ENCODE measurements at regions of chr4 and their contacts with region 1.

Region 1: GRCh38 chr4:53015681-53016080 is 153.6 kb downstream of the RASL11B start:
- DNase-seq: no peak
- ATAC-seq: no peak
- H3K4me3 ChIP-seq: no peak overlapping the region
- H3K27ac ChIP-seq: no peak overlapping the region
- H3K4me1 ChIP-seq: 0 out of 2 replicates have a peak, but pooled peaks cover 4% of the 10 kb centered on the region
- H3K27me3 ChIP-seq: no peaks in the 10 kb centered on the region
- CTCF ChIP-seq: peak; percentile 61; the same call in 1 of the 2 replicates

Region 2: GRCh38 chr4:53075162-53075785 is 59.6 kb after region 1 on chr4:
- CTCF ChIA-PET with region 1: no interaction called
- POLR2A ChIA-PET with region 1: no interaction called
- in situ Hi-C with region 1: no loop called
- intact Hi-C with region 1: loop called (anchors 10 kb)
- DNase-seq: no peak
- ATAC-seq: no peak
- H3K4me3 ChIP-seq: no peak overlapping the region
- H3K27ac ChIP-seq: no peak overlapping the region
- H3K4me1 ChIP-seq: no peaks in the 10 kb centered on the region
- H3K27me3 ChIP-seq: no peaks in the 10 kb centered on the region
- CTCF ChIP-seq: no peak

Region 3: GRCh38 chr4:53196882-53197771 is 181.4 kb after region 1 on chr4:
- CTCF ChIA-PET with region 1: no interaction called
- POLR2A ChIA-PET with region 1: no interaction called
- in situ Hi-C with region 1: no loop called
- intact Hi-C with region 1: loop called (anchors 10 kb)
- DNase-seq: peak; percentile 36
- ATAC-seq: peak; percentile 62; the same call in 1 of the 2 replicates
- H3K4me3 ChIP-seq: no peak overlapping the region
- H3K27ac ChIP-seq: no peak overlapping the region
- H3K4me1 ChIP-seq: no peaks in the 10 kb centered on the region
- H3K27me3 ChIP-seq: no peaks in the 10 kb centered on the region
- CTCF ChIP-seq: peak; percentile 61; the same call in 1 of the 2 replicates

Region 4: GRCh38 chr4:53365486-53366300 is 350.0 kb after region 1 on chr4 and contains the start of gene SCFD2:
- CTCF ChIA-PET with region 1: no interaction called
- POLR2A ChIA-PET with region 1: no interaction called
- in situ Hi-C with region 1: no loop called
- intact Hi-C with region 1: loop called (anchors 10 kb)
- DNase-seq: peak; percentile 80
- ATAC-seq: peak; percentile 100
- H3K4me3 ChIP-seq: peak within 1 kb of the TSS; percentile 89 to 95
- H3K27ac ChIP-seq: peak within 1 kb of the TSS; percentile 90
- H3K4me1 ChIP-seq: no peaks in the 10 kb centered on the region; the same call in 1 of the 2 replicates
- H3K27me3 ChIP-seq: no peaks in the 10 kb centered on the region; the same call in 1 of the 2 replicates
- CTCF ChIP-seq: no peak
- total RNA-seq, gene SCFD2: 7.4 TPM

Region 5: GRCh38 chr4:53489279-53489889 is 473.7 kb after region 1 on chr4:
- CTCF ChIA-PET with region 1: no interaction called
- POLR2A ChIA-PET with region 1: no interaction called
- in situ Hi-C with region 1: no loop called
- intact Hi-C with region 1: loop called (anchors 10 kb)
- DNase-seq: no peak
- ATAC-seq: no peak
- H3K4me3 ChIP-seq: no peak overlapping the region
- H3K27ac ChIP-seq: no peak overlapping the region
- H3K4me1 ChIP-seq: no peaks in the 10 kb centered on the region
- H3K27me3 ChIP-seq: no peaks in the 10 kb centered on the region
- CTCF ChIP-seq: no peak

Region 6: GRCh38 chr4:53520116-53520515 is 504.4 kb after region 1 on chr4:
- CTCF ChIA-PET with region 1: no interaction called
- POLR2A ChIA-PET with region 1: no interaction called
- in situ Hi-C with region 1: no loop called
- intact Hi-C with region 1: no loop called
- DNase-seq: no peak
- ATAC-seq: no peak
- H3K4me3 ChIP-seq: no peak overlapping the region
- H3K27ac ChIP-seq: no peak overlapping the region
- H3K4me1 ChIP-seq: no peaks in the 10 kb centered on the region
- H3K27me3 ChIP-seq: no peaks in the 10 kb centered on the region
- CTCF ChIP-seq: no peak

Region 7: DNA sequence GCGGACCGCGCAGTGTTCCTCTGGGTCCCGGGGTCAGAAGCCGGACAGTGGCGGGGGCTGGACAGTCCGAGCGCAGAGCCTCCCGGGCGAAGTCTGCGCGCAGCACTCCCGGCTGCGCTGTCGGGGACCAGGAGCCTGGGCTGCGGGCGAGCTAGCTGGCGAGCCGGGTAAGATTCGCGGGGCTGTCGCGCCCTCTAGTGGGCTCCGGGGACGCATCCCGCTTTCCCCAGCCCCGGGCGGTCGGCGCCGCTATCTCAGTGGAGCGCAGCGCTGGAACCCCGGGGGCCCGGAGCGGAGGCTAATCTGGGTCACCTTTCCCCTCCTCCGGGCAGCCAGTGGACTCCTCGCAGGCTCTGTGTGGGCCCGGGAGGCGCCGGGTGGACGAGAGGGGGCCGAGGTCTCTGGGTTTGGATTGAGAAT is 1217.6 kb after region 1 on chr4:
- CTCF ChIA-PET with region 1: interaction called, 3 read pairs
- POLR2A ChIA-PET with region 1: no interaction called
- in situ Hi-C with region 1: no loop called
- intact Hi-C with region 1: loop called (anchors 10 kb)
- DNase-seq: peak; percentile 35
- ATAC-seq: peak; percentile 88
- H3K4me3 ChIP-seq: peak overlapping the region; percentile 36 to 53
- H3K27ac ChIP-seq: no peak overlapping the region
- H3K4me1 ChIP-seq: no peaks in the 10 kb centered on the region
- H3K27me3 ChIP-seq: peaks cover 11% of the 10 kb centered on the region; the same call in 1 of the 2 replicates
- CTCF ChIP-seq: peak; percentile 78

Measured in Panc1 (cell line).